CD4-positive, alpha-beta memory T cell (primary cell): ENCODE measurements at regions of chr10 and their contacts with region 1.

Region 1: DNA sequence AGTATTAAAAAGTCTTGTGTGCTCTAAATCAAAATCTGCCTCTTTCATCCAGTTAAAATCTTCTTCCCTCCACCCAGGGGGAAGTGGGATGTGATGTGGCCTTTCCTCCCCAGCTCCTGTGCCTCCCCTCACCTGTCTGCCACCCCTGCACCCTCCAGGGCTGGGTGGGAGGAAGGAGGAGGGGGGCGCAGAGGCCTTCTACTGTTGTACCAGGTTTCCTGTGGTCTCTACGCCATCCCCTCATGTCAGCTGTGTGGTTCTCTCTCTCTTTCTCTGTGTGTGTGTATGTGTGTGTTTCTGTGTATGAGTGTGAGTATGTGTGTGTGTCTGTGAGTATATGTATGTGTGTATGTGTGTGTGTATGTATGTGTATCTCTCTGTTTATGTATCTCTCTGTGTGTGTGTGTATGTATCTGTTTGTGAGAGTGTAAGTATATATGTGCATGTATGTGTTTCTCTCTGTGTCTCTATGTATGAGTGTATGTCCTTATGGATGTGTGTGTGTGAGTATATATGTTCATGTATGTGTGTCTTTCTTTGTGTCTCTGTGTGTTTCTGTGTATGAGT is 45.5 kb upstream of the C10orf71 start:
- DNase-seq: no peak
- H3K4me3 ChIP-seq: no peak overlapping the region
- H3K4me3 Mint-ChIP-seq: no peak overlapping the region
- H3K27ac ChIP-seq: no peak overlapping the region
- H3K27ac Mint-ChIP-seq: no peak overlapping the region
- H3K4me1 ChIP-seq: peaks cover 16% of the 10 kb centered on the region
- H3K4me1 Mint-ChIP-seq: no peaks in the 10 kb centered on the region
- H3K27me3 ChIP-seq: no peaks in the 10 kb centered on the region
- H3K27me3 Mint-ChIP-seq: peaks cover 0 to 2% of the 10 kb centered on the region in 2 donors

Region 2: GRCh38 chr10:49187950-49188761 is 65.3 kb before region 1 on chr10 and contains the start of gene TMEM273:
- CTCF ChIA-PET with region 1: no interaction called
- POLR2A ChIA-PET with region 1: no interaction called
- intact Hi-C with region 1: loop called (anchors 2 kb)
- DNase-seq: peak in 2 of 5 donors; percentile 33 to 70
- H3K4me3 ChIP-seq: peak within 1 kb of the TSS; percentile 22 to 62
- H3K4me3 Mint-ChIP-seq: peak within 1 kb of the TSS; percentile 60 to 88 (median 83)
- H3K27ac ChIP-seq: peak within 1 kb of the TSS; percentile 63
- H3K27ac Mint-ChIP-seq: peak within 1 kb of the TSS; percentile 61 to 90 (median 87)
- H3K4me1 ChIP-seq: peaks cover 41% of the 10 kb centered on the region
- H3K4me1 Mint-ChIP-seq: peaks cover 14 to 85% (median 37%) of the 10 kb centered on the region in 4 donors
- H3K27me3 ChIP-seq: no peaks in the 10 kb centered on the region
- H3K27me3 Mint-ChIP-seq: peaks cover 0 to 3% of the 10 kb centered on the region in 2 donors
- total RNA-seq, gene TMEM273: 27.7 to 30.4 TPM